ENCODE measurements at regions of chr1 and their contacts with region 1.

Region 1: DNA sequence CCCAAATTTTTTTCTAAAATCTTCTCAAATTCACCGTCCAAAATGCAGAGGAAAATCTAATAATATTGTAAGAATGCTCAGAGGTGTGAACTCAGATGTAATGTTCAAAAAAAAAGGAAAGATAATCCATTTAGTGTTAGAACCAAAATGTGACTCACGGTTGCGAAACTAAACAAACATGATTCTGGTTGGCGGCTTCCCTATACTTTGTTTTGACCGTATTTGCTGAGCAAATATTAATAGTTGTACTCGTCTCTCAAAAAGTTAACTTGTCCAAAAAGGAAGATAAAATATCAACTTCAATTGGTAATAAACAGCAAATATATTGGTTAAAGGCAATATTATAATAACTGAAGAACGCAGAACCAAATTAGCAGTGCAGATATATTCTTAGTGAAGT is 34.4 kb downstream of the ZSWIM5 start:
- DNase-seq: no peak
- ATAC-seq: no peak
- H3K4me3 ChIP-seq: no peak overlapping the region
- H3K27ac ChIP-seq: no peak overlapping the region
- H3K4me1 ChIP-seq: no peaks in the 10 kb centered on the region
- H3K27me3 ChIP-seq: no peaks in the 10 kb centered on the region
- CTCF ChIP-seq: no peak
- POLR2A ChIP-seq: no peak
- RAD21 ChIP-seq: no peak

Region 2: GRCh38 chr1:44213222-44214112 is 958.6 kb before region 1 on chr1 and contains the start of gene DMAP1:
- CTCF ChIA-PET with region 1: no interaction called
- POLR2A ChIA-PET with region 1: no interaction called
- RAD21 ChIA-PET with region 1: no interaction called
- intact Hi-C with region 1: no loop called
- DNase-seq: peak; percentile 67
- ATAC-seq: peak; percentile 81
- H3K4me3 ChIP-seq: peak within 1 kb of the TSS; percentile 95 to 97
- H3K27ac ChIP-seq: peak within 1 kb of the TSS; percentile 36; the same call in 1 of the 2 replicates
- H3K4me1 ChIP-seq: peaks cover 10 to 23% of the 10 kb centered on the region in 2 experiments; a peak in 3 of 4 replicates
- H3K27me3 ChIP-seq: no peaks in the 10 kb centered on the region
- CTCF ChIP-seq: no peak
- POLR2A ChIP-seq: no peak
- RAD21 ChIP-seq: peak; percentile 50
- total RNA-seq, gene DMAP1: 27.8 TPM

Region 3: GRCh38 chr1:45033356-45033755 is 138.7 kb before region 1 on chr1:
- CTCF ChIA-PET with region 1: no interaction called
- POLR2A ChIA-PET with region 1: no interaction called
- RAD21 ChIA-PET with region 1: no interaction called
- intact Hi-C with region 1: no loop called
- DNase-seq: no peak
- ATAC-seq: no peak
- H3K4me3 ChIP-seq: no peak overlapping the region
- H3K27ac ChIP-seq: no peak overlapping the region
- H3K4me1 ChIP-seq: peaks cover 0 to 5% of the 10 kb centered on the region in 2 experiments; a peak in 1 of 4 replicates
- H3K27me3 ChIP-seq: no peaks in the 10 kb centered on the region
- CTCF ChIP-seq: no peak
- POLR2A ChIP-seq: no peak
- RAD21 ChIP-seq: no peak

Region 4: GRCh38 chr1:45221716-45222115 is 49.7 kb after region 1 on chr1:
- CTCF ChIA-PET with region 1: no interaction called
- POLR2A ChIA-PET with region 1: no interaction called
- RAD21 ChIA-PET with region 1: no interaction called
- intact Hi-C with region 1: loop called (anchors 1 kb)
- DNase-seq: no peak
- ATAC-seq: no peak
- H3K4me3 ChIP-seq: no peak overlapping the region
- H3K27ac ChIP-seq: no peak overlapping the region
- H3K4me1 ChIP-seq: peaks cover 0 to 6% of the 10 kb centered on the region in 2 experiments; a peak in 1 of 4 replicates
- H3K27me3 ChIP-seq: no peaks in the 10 kb centered on the region
- CTCF ChIP-seq: no peak
- POLR2A ChIP-seq: no peak
- RAD21 ChIP-seq: no peak

Region 5: GRCh38 chr1:45721207-45721606 is 549.2 kb after region 1 on chr1:
- CTCF ChIA-PET with region 1: no interaction called
- POLR2A ChIA-PET with region 1: no interaction called
- RAD21 ChIA-PET with region 1: no interaction called
- intact Hi-C with region 1: no loop called
- DNase-seq: no peak
- ATAC-seq: no peak
- H3K4me3 ChIP-seq: no peak overlapping the region
- H3K27ac ChIP-seq: no peak overlapping the region
- H3K4me1 ChIP-seq: no peaks in the 10 kb centered on the region; a peak in 2 of 4 replicates
- H3K27me3 ChIP-seq: no peaks in the 10 kb centered on the region
- CTCF ChIP-seq: no peak
- POLR2A ChIP-seq: no peak
- RAD21 ChIP-seq: no peak

Measured in HCT116 (cell line).